CD8-positive, alpha-beta T cell (primary cell): ENCODE measurements at regions of chr7 and their contacts with region 1.

Region 1: GRCh38 chr7:79936281-79936983 is 198.2 kb upstream of the GNAI1 start:
- DNase-seq: no peak
- ATAC-seq: no peak
- H3K4me3 ChIP-seq: no peak overlapping the region
- H3K4me3 Mint-ChIP-seq: no peak overlapping the region
- H3K27ac ChIP-seq: no peak overlapping the region
- H3K27ac Mint-ChIP-seq: no peak overlapping the region
- H3K4me1 ChIP-seq: no peaks in the 10 kb centered on the region
- H3K4me1 Mint-ChIP-seq: peaks cover 11% of the 10 kb centered on the region
- H3K27me3 ChIP-seq: no peaks in the 10 kb centered on the region
- H3K27me3 Mint-ChIP-seq: no peaks in the 10 kb centered on the region
- CTCF ChIP-seq: no peak

Region 2: GRCh38 chr7:79923953-79924352 is 12.5 kb before region 1 on chr7:
- CTCF ChIA-PET with region 1: no interaction called
- POLR2A ChIA-PET with region 1: no interaction called
- intact Hi-C with region 1: no loop called
- DNase-seq: no peak
- ATAC-seq: no peak
- H3K4me3 ChIP-seq: no peak overlapping the region
- H3K4me3 Mint-ChIP-seq: no peak overlapping the region
- H3K27ac ChIP-seq: no peak overlapping the region
- H3K27ac Mint-ChIP-seq: no peak overlapping the region
- H3K4me1 ChIP-seq: no peaks in the 10 kb centered on the region
- H3K4me1 Mint-ChIP-seq: peaks cover 2% of the 10 kb centered on the region
- H3K27me3 ChIP-seq: no peaks in the 10 kb centered on the region
- H3K27me3 Mint-ChIP-seq: no peaks in the 10 kb centered on the region
- CTCF ChIP-seq: no peak

Region 3: GRCh38 chr7:79973455-79973854 is 37.0 kb after region 1 on chr7:
- CTCF ChIA-PET with region 1: no interaction called
- POLR2A ChIA-PET with region 1: no interaction called
- intact Hi-C with region 1: loop called in 1 of 2 experiments (anchors 5 kb)
- DNase-seq: no peak
- ATAC-seq: no peak
- H3K4me3 ChIP-seq: no peak overlapping the region
- H3K4me3 Mint-ChIP-seq: no peak overlapping the region
- H3K27ac ChIP-seq: no peak overlapping the region
- H3K27ac Mint-ChIP-seq: no peak overlapping the region
- H3K4me1 ChIP-seq: peaks cover 6% of the 10 kb centered on the region
- H3K4me1 Mint-ChIP-seq: peaks cover 11% of the 10 kb centered on the region
- H3K27me3 ChIP-seq: no peaks in the 10 kb centered on the region
- H3K27me3 Mint-ChIP-seq: no peaks in the 10 kb centered on the region
- CTCF ChIP-seq: no peak

Region 4: DNA sequence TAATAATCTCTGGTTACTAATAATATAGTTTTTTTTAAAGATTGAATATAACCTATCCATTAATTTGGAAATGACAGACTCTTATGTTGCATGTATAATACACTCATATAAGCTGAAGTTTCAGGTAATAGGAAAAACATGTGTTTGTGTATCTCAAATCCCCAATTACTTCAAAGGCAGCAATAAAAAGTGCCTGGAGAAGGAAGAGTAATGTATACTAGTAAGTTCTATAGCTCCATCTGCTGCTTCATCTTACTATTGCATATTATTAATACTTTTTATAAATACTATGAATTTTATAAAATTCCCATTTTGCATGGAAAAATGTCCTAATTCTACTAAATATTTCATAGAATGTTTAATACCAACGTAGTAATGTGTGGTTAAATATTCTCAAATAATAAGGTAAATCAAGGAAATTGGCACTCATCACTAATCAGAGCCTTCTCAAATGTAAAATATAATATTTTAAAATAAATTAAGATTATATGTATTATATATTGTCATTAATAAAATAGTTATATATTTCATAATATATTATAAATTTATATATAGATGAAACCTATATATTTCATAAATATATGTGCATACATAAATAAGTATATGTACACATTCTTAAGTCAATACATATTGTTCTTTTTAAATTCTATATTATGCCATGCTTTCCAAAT is 1521.6 kb after region 1 on chr7:
- CTCF ChIA-PET with region 1: no interaction called
- POLR2A ChIA-PET with region 1: no interaction called
- intact Hi-C with region 1: no loop called
- DNase-seq: no peak
- ATAC-seq: no peak
- H3K4me3 ChIP-seq: no peak overlapping the region
- H3K4me3 Mint-ChIP-seq: no peak overlapping the region
- H3K27ac ChIP-seq: no peak overlapping the region
- H3K27ac Mint-ChIP-seq: no peak overlapping the region
- H3K4me1 ChIP-seq: no peaks in the 10 kb centered on the region
- H3K4me1 Mint-ChIP-seq: no peaks in the 10 kb centered on the region
- H3K27me3 ChIP-seq: no peaks in the 10 kb centered on the region
- H3K27me3 Mint-ChIP-seq: no peaks in the 10 kb centered on the region
- CTCF ChIP-seq: no peak